ENCODE measurements at regions of chr3 and their contacts with region 1.

Region 1: GRCh38 chr3:150721285-150722130 is 17.8 kb upstream of the ERICH6 start:
- DNase-seq: peak in 2 of 5 donors; percentile 51 to 65
- H3K4me3 ChIP-seq: no peak overlapping the region
- H3K4me3 Mint-ChIP-seq: no peak overlapping the region
- H3K27ac ChIP-seq: no peak overlapping the region
- H3K27ac Mint-ChIP-seq: peak overlapping the region in 3 of 8 donors; percentile 0 to 37 (median 0)
- H3K4me1 ChIP-seq: no peaks in the 10 kb centered on the region
- H3K4me1 Mint-ChIP-seq: peaks cover 0 to 14% (median 10%) of the 10 kb centered on the region in 3 donors
- H3K27me3 ChIP-seq: no peaks in the 10 kb centered on the region
- H3K27me3 Mint-ChIP-seq: peaks cover 0 to 1% of the 10 kb centered on the region in 2 donors

Region 2: DNA sequence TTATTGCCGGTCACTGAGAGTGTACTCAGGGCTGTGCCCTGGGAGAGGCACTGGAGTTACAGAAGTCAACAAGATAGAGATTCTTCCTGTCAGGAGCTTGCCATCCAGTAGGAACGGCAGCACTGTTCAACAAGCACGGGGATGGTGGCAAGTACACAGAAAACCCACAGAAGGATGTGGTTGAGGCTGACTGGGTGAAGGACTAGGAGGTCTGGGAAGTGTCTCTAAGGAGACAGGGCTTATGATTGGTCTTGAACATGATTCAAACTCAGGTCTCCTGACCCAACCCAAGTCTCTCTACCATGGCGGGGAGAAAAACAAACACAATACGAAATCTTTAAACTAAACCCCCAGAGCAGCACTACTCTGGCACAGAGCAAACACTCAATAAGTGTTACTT is 55.3 kb before region 1 on chr3:
- CTCF ChIA-PET with region 1: no interaction called
- POLR2A ChIA-PET with region 1: no interaction called
- DNase-seq: no peak
- H3K4me3 ChIP-seq: no peak overlapping the region
- H3K4me3 Mint-ChIP-seq: peak overlapping the region in 2 of 7 donors; percentile 30 to 46
- H3K27ac ChIP-seq: no peak overlapping the region
- H3K27ac Mint-ChIP-seq: peak overlapping the region in 3 of 8 donors; percentile 7 to 61 (median 20)
- H3K4me1 ChIP-seq: no peaks in the 10 kb centered on the region
- H3K4me1 Mint-ChIP-seq: peaks cover 7 to 15% (median 14%) of the 10 kb centered on the region in 3 donors
- H3K27me3 ChIP-seq: peaks cover 3% of the 10 kb centered on the region
- H3K27me3 Mint-ChIP-seq: peaks cover 10 to 11% of the 10 kb centered on the region in 2 donors

Region 3: DNA sequence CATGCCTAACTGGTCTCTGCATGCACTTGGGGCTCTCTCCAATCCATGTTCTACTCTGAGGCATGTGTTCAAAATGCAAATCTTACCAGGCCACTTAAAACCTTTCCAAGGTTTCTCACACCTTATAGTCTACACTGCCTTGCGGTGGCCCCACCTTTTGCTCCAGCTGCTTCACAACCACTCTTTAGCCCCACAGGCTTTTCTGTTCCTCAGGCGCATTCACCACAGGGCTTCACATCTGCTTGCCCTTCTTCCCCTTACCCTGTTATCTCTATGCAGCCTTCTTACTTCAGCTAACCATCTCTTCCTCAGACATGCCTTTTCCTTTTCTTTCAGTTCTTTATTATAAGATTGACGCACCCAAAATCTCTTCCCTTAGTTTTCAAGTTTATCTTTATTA is 145.9 kb after region 1 on chr3:
- CTCF ChIA-PET with region 1: interaction called, 27 read pairs
- POLR2A ChIA-PET with region 1: no interaction called
- DNase-seq: no peak
- H3K4me3 ChIP-seq: no peak overlapping the region
- H3K4me3 Mint-ChIP-seq: no peak overlapping the region
- H3K27ac ChIP-seq: no peak overlapping the region
- H3K27ac Mint-ChIP-seq: no peak overlapping the region
- H3K4me1 ChIP-seq: no peaks in the 10 kb centered on the region
- H3K4me1 Mint-ChIP-seq: peaks cover 0 to 3% (median 2%) of the 10 kb centered on the region in 3 donors
- H3K27me3 ChIP-seq: no peaks in the 10 kb centered on the region
- H3K27me3 Mint-ChIP-seq: peaks cover 6 to 39% of the 10 kb centered on the region in 2 donors

Region 4: GRCh38 chr3:151117051-151117450 is 395.5 kb after region 1 on chr3:
- CTCF ChIA-PET with region 1: no interaction called
- POLR2A ChIA-PET with region 1: no interaction called
- DNase-seq: no peak
- H3K4me3 ChIP-seq: no peak overlapping the region
- H3K4me3 Mint-ChIP-seq: no peak overlapping the region
- H3K27ac ChIP-seq: no peak overlapping the region
- H3K27ac Mint-ChIP-seq: no peak overlapping the region
- H3K4me1 ChIP-seq: no peaks in the 10 kb centered on the region
- H3K4me1 Mint-ChIP-seq: no peaks in the 10 kb centered on the region
- H3K27me3 ChIP-seq: no peaks in the 10 kb centered on the region
- H3K27me3 Mint-ChIP-seq: peaks cover 6 to 38% of the 10 kb centered on the region in 2 donors

Measured in CD8-positive, alpha-beta memory T cell (primary cell).